ENCODE measurements at regions of chr11 and their contacts with region 1.

Region 1: GRCh38 chr11:62394825-62395538 is 23.9 kb upstream of the SCGB1A1 start:
- DNase-seq: peak; percentile 65
- H3K4me3 Mint-ChIP-seq: no peak overlapping the region
- H3K27ac Mint-ChIP-seq: no peak overlapping the region
- H3K4me1 Mint-ChIP-seq: peaks cover 41% of the 10 kb centered on the region
- H3K27me3 Mint-ChIP-seq: no peaks in the 10 kb centered on the region

Region 2: DNA sequence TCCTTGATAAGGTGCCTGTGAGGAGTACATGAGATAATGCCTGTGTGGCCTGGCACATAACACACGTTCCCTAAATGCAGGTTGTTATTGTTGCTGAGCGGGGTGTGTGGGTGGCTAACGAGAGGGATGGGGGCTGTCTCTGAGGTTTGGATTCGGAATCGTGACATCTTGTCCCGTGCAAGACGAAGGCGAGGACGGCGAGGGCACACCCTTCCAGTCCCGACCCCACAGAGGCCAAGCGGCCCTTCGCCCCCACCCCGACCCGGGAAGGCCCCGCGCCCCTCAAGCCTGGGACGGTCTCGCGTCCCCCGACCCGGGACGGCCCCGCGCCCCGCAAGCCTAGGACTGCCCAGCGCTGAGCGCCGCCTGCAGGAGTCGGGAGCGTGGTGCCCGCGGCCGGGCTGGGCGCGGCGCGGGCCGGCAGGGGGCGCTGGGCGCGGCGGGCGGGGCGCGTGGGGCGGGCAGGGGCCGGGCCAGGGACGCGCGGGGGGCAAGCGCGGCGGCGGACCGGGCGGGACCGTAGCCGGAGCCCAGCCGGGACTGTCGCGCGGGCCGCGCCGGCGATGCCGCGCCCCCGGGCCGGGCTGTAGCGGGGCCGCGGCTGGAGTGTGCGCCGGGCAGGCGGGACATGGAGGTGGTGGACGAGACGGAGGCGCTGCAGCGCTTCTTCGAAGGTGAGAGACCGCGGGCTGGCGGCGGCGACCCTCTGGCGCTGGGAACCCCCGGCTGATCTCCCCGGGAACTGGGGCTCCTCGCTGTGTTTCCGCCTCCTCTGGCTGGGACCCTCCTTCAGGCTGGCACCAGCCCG is 642.7 kb before region 1 on chr11 and contains the start of gene MYRF:
- CTCF ChIA-PET with region 1: no interaction called
- DNase-seq: peak; percentile 68
- H3K4me3 Mint-ChIP-seq: peak within 1 kb of the TSS; percentile 59
- H3K27ac Mint-ChIP-seq: no peak within 1 kb of the TSS
- H3K4me1 Mint-ChIP-seq: peaks cover 23% of the 10 kb centered on the region
- H3K27me3 Mint-ChIP-seq: peaks cover 65% of the 10 kb centered on the region

Region 3: GRCh38 chr11:62273789-62274275 is 121.2 kb before region 1 on chr11:
- CTCF ChIA-PET with region 1: no interaction called
- DNase-seq: no peak
- H3K4me3 Mint-ChIP-seq: no peak overlapping the region
- H3K27ac Mint-ChIP-seq: no peak overlapping the region
- H3K4me1 Mint-ChIP-seq: no peaks in the 10 kb centered on the region
- H3K27me3 Mint-ChIP-seq: peaks cover 26% of the 10 kb centered on the region

Region 4: DNA sequence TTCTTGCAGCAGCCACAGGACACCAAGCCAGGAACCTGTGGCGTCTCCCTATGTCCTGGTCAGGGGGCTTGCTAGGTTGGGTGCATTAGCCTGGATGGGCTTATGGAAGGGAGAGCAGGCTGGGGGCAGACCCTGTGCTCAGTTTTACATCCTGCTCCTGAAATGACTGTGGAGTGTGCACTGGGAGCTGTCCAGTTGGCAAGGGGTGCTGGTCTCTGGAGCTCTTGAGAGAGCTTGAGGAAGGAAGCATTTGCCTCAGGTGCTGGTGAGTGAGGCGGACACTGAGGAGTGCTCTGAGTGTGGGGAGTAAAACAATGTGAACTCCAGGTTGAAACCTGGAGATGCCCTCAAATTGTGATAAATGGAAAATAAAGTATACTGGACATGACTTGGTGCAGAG is 99.5 kb before region 1 on chr11:
- CTCF ChIA-PET with region 1: no interaction called
- DNase-seq: peak; percentile 50
- H3K4me3 Mint-ChIP-seq: no peak overlapping the region
- H3K27ac Mint-ChIP-seq: no peak overlapping the region
- H3K4me1 Mint-ChIP-seq: no peaks in the 10 kb centered on the region
- H3K27me3 Mint-ChIP-seq: peaks cover 30% of the 10 kb centered on the region

Region 5: GRCh38 chr11:62383822-62384221 is 11.2 kb before region 1 on chr11:
- CTCF ChIA-PET with region 1: interaction called, 12 read pairs
- DNase-seq: no peak
- H3K4me3 Mint-ChIP-seq: no peak overlapping the region
- H3K27ac Mint-ChIP-seq: no peak overlapping the region
- H3K4me1 Mint-ChIP-seq: peaks cover 27% of the 10 kb centered on the region
- H3K27me3 Mint-ChIP-seq: peaks cover 10% of the 10 kb centered on the region

Region 6: GRCh38 chr11:62419314-62419929 is 24.4 kb after region 1 on chr11:
- CTCF ChIA-PET with region 1: interaction called, 61 read pairs
- DNase-seq: no peak
- H3K4me3 Mint-ChIP-seq: no peak overlapping the region
- H3K27ac Mint-ChIP-seq: no peak overlapping the region
- H3K4me1 Mint-ChIP-seq: peaks cover 3% of the 10 kb centered on the region
- H3K27me3 Mint-ChIP-seq: peaks cover 55% of the 10 kb centered on the region

Region 7: DNA sequence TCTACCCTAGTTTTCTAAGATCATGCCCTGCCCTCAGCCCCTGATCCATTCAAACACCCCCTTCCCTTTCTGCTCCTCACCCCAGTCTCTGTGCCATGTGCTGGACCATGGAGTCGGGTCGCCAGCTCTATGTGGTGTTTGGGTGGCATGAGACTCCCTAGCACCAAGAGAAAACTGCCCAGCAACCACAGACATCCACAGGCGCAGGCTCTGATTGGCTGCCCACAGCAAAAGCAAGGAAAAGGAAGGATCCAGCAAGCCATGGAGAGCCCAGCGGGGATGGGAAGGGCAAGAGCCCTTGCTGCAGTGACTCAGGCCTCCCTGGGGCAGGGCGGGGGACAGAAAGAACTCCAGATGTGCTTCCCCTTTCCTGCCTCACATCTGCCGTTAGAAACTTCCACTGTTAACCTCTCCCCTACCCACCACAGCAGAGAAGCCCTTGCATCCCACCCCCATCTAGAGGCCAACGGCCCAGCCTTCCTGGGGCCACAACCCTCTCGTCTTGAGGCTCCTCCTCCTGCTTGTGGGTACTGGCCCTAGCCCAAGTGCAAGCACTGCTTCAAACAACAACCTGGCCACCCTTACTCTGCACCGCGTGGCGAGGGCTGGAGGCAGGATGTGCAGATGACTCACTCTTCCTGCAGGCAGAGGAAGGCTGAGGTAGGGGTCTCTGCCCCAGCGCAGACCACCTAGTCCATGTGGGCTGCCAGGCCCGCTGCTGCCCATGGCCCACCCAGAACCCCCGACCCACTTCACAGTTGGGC is 161.3 kb after region 1 on chr11:
- CTCF ChIA-PET with region 1: interaction called, 23 read pairs
- DNase-seq: peak; percentile 93
- H3K4me3 Mint-ChIP-seq: peak overlapping the region; percentile 59
- H3K27ac Mint-ChIP-seq: peak overlapping the region; percentile 97
- H3K4me1 Mint-ChIP-seq: peaks cover 95% of the 10 kb centered on the region
- H3K27me3 Mint-ChIP-seq: no peaks in the 10 kb centered on the region

Region 8: GRCh38 chr11:62573070-62573591 is 178.1 kb after region 1 on chr11:
- CTCF ChIA-PET with region 1: interaction called, 16 read pairs
- DNase-seq: peak; percentile 44
- H3K4me3 Mint-ChIP-seq: peak overlapping the region; percentile 86
- H3K27ac Mint-ChIP-seq: peak overlapping the region; percentile 84
- H3K4me1 Mint-ChIP-seq: peaks cover 58% of the 10 kb centered on the region
- H3K27me3 Mint-ChIP-seq: no peaks in the 10 kb centered on the region

Measured in activated naive CD4-positive, alpha-beta T cell treated with anti-CD3 and anti-CD28 coated beads, Interleukin-2, amount 10 ng/mL, durations not matched to agents 7 days and 5 days (primary cell).